GM12878 (cell line): ENCODE measurements at regions of chr6 and their contacts with region 1.

Region 1: GRCh38 chr6:16514249-16514648 is 247.0 kb downstream of the ATXN1 start:
- DNase-seq: no peak
- ATAC-seq: peak; percentile 50
- H3K4me3 ChIP-seq: no peak overlapping the region
- H3K27ac ChIP-seq: no peak overlapping the region
- H3K4me1 ChIP-seq: peaks cover 45% of the 10 kb centered on the region
- H3K27me3 ChIP-seq: no peaks in the 10 kb centered on the region
- CTCF ChIP-seq: peak; percentile 49 to 62 (median 60)
- EP300 ChIP-seq: no peak
- POLR2A ChIP-seq: no peak
- RAD21 ChIP-seq: peak; percentile 78

Region 2: GRCh38 chr6:16403831-16404230 is 110.4 kb before region 1 on chr6:
- CTCF ChIA-PET with region 1: interaction called, 14 read pairs
- POLR2A ChIA-PET with region 1: no interaction called
- RAD21 ChIA-PET with region 1: interaction called, 6 read pairs
- SMC1A ChIA-PET with region 1: interaction called, 6 read pairs
- in situ Hi-C with region 1: no loop called
- intact Hi-C with region 1: no loop called
- DNase-seq: no peak
- ATAC-seq: no peak
- H3K4me3 ChIP-seq: no peak overlapping the region
- H3K27ac ChIP-seq: no peak overlapping the region
- H3K4me1 ChIP-seq: peaks cover 4% of the 10 kb centered on the region; the same call in 1 of the 2 replicates
- H3K27me3 ChIP-seq: no peaks in the 10 kb centered on the region
- CTCF ChIP-seq: no peak; a peak in 1 of 6 replicates
- EP300 ChIP-seq: no peak
- POLR2A ChIP-seq: no peak
- RAD21 ChIP-seq: peak; percentile 21; the same call in 1 of the 2 replicates

Region 3: DNA sequence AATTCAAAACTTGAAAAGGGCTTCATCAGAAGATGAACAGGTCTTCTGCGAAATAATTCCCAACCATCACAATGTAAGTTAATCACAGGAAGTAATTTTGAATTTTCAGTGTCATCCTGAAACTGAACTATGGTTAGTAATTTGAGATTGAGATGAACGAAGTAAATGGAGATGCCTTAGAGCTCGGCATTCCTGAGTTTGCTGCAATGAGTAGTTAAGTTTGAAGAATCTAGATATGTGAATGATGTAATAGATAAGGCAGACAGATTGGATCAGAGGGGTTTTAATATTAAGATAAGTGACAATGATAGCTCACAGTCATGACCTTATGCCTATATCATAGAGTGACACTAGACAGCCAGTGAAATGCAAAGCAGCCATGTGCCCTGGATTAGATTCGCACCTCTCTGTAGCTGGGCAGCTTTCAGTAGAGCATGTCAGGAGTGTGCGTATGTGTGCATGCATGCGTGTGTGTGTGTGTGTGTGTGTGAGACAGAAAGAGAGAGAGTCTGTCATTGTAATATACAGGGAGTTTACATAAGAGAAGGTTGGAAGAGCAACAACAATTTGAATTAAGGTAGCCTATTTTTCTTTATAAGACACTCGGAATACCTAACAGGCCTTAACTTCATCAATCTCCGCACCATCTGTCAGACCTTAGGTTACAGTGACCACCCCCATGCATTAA is 42.9 kb before region 1 on chr6:
- CTCF ChIA-PET with region 1: interaction called, 87 read pairs
- POLR2A ChIA-PET with region 1: interaction called, 9 read pairs
- RAD21 ChIA-PET with region 1: interaction called, 101 read pairs
- SMC1A ChIA-PET with region 1: interaction called, 49 read pairs
- in situ Hi-C with region 1: no loop called
- intact Hi-C with region 1: loop called (anchors 5 kb)
- DNase-seq: peak; percentile 76
- ATAC-seq: peak; percentile 71
- H3K4me3 ChIP-seq: 0 out of 2 replicates have a peak overlapping the region, but pooled peaks have one; percentile 9
- H3K27ac ChIP-seq: peak overlapping the region; percentile 90
- H3K4me1 ChIP-seq: peaks cover 71% of the 10 kb centered on the region
- H3K27me3 ChIP-seq: no peaks in the 10 kb centered on the region
- CTCF ChIP-seq: no peak
- EP300 ChIP-seq: peak; percentile 74 to 81; a peak in 3 of 4 replicates
- POLR2A ChIP-seq: peak; percentile 47; the same call in 1 of the 2 replicates
- RAD21 ChIP-seq: no peak

Region 4: DNA sequence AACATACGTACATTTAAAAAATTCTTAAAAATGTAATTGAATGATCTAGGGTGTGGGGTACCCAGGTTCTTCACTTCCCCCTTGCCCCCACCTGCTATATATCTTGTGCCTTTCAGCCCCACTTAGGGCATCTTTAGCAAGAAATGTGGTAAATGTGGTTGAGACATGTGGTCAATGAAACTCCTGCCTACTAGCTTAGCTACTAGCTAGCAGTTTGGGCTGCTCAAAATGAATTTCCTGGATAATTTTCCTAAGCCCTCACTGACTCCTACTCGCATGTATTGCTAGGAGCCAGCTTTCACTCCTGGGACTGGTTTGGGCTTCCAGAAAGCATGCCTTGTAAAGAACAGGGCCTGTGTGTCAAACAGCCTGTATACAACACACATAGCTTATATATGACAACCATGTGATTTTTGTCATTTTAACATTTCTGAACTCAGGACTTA is 10.3 kb before region 1 on chr6:
- CTCF ChIA-PET with region 1: interaction called, 203 read pairs
- POLR2A ChIA-PET with region 1: interaction called, 5 read pairs
- RAD21 ChIA-PET with region 1: interaction called, 13 read pairs
- SMC1A ChIA-PET with region 1: interaction called, 27 read pairs
- in situ Hi-C with region 1: no loop called
- intact Hi-C with region 1: no loop called
- DNase-seq: peak; percentile 92
- ATAC-seq: peak; percentile 85
- H3K4me3 ChIP-seq: no peak overlapping the region; the same call in 1 of the 2 replicates
- H3K27ac ChIP-seq: peak overlapping the region; percentile 70
- H3K4me1 ChIP-seq: peaks cover 50% of the 10 kb centered on the region
- H3K27me3 ChIP-seq: no peaks in the 10 kb centered on the region
- CTCF ChIP-seq: no peak
- EP300 ChIP-seq: peak; percentile 85 to 90
- POLR2A ChIP-seq: no peak
- RAD21 ChIP-seq: no peak

Region 5: DNA sequence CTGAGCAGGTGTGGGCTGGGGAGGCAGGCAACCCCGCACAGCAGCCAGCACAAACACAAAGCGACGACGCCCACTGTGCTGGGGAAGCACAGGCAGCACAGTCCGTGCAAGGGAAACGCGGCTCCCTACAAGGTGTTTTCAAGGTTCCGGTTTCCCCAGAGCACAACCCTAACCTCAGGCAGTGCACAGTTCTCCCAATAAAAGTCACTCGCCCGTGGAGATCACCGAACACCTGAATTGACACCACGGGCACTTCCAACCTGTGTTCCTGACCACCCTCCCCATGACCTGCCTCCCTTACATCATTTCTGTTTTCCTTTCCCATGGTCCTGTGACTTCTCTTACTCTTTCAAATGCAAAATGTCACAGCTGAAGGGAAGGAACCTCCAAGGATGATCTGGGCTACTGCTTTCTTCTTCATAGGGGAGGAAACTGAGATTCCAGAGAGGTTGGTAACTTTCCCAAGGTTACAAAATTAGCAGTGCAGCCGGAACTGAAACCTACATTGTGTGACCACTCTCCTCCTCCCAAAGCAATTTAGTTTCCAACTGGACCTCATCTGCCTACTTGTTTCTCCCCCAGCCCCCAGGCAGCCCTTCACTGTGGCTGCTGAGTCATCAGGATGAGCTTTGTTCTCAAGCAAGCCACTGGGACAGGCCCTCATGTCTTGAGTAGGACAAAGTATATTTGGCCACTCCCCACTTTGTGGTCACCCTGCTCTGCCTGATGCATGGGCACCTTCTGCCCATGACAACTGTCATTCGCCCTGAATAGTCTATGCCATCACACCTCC is 121.8 kb after region 1 on chr6:
- CTCF ChIA-PET with region 1: interaction called, 9 read pairs
- POLR2A ChIA-PET with region 1: interaction called, 3 read pairs
- RAD21 ChIA-PET with region 1: interaction called, 23 read pairs
- SMC1A ChIA-PET with region 1: interaction called, 40 read pairs
- in situ Hi-C with region 1: no loop called
- intact Hi-C with region 1: loop called (anchors 5 kb)
- DNase-seq: peak; percentile 80
- ATAC-seq: peak; percentile 81
- H3K4me3 ChIP-seq: peak overlapping the region; percentile 36; the same call in 1 of the 2 replicates
- H3K27ac ChIP-seq: peak overlapping the region; percentile 66
- H3K4me1 ChIP-seq: peaks cover 39% of the 10 kb centered on the region
- H3K27me3 ChIP-seq: no peaks in the 10 kb centered on the region
- CTCF ChIP-seq: no peak
- EP300 ChIP-seq: peak in 1 of 2 experiments; percentile 20; a peak in 2 of 4 replicates
- POLR2A ChIP-seq: no peak
- RAD21 ChIP-seq: no peak

Region 6: DNA sequence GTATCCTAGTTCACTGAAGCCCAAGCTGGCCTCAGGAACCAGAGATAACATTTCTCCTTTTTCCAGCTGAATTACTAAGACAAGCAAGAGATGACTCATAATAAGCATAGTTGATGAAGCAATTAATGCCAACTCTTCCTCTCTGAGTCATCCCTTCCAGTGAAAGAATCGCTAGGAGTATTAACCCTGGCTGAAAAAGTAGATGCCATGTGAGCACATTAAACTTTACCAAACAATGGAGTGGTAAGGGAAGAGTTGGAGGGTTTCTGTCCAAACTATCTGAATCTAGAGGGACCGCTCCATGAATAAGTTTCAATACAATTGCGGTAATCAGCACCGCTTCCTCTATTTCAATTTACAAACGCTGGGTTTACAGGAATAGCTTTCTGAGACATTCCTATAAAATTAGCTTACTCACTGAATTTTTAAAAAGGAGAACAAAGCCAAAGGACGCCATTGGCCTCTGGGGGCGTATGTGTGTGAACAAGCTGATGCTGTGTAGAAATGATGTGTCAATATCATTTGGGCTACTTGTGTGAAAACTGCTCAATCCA is 198.8 kb after region 1 on chr6:
- CTCF ChIA-PET with region 1: interaction called, 27 read pairs
- POLR2A ChIA-PET with region 1: no interaction called
- RAD21 ChIA-PET with region 1: interaction called, 17 read pairs
- SMC1A ChIA-PET with region 1: interaction called, 13 read pairs
- in situ Hi-C with region 1: no loop called
- intact Hi-C with region 1: loop called (anchors 5 kb)
- DNase-seq: no peak
- ATAC-seq: peak; percentile 71
- H3K4me3 ChIP-seq: no peak overlapping the region
- H3K27ac ChIP-seq: peak overlapping the region; percentile 40; the same call in 1 of the 2 replicates
- H3K4me1 ChIP-seq: peaks cover 18% of the 10 kb centered on the region
- H3K27me3 ChIP-seq: no peaks in the 10 kb centered on the region
- CTCF ChIP-seq: peak; percentile 25 to 56 (median 50)
- EP300 ChIP-seq: peak in 1 of 2 experiments; percentile 66; a peak in 1 of 4 replicates
- POLR2A ChIP-seq: no peak
- RAD21 ChIP-seq: peak; percentile 50